Activated B cell treated with CpG ODN at 0.5 μM for 24 hours (primary cell): ENCODE measurements at regions of chr1 and their contacts with region 1.

Region 1: DNA sequence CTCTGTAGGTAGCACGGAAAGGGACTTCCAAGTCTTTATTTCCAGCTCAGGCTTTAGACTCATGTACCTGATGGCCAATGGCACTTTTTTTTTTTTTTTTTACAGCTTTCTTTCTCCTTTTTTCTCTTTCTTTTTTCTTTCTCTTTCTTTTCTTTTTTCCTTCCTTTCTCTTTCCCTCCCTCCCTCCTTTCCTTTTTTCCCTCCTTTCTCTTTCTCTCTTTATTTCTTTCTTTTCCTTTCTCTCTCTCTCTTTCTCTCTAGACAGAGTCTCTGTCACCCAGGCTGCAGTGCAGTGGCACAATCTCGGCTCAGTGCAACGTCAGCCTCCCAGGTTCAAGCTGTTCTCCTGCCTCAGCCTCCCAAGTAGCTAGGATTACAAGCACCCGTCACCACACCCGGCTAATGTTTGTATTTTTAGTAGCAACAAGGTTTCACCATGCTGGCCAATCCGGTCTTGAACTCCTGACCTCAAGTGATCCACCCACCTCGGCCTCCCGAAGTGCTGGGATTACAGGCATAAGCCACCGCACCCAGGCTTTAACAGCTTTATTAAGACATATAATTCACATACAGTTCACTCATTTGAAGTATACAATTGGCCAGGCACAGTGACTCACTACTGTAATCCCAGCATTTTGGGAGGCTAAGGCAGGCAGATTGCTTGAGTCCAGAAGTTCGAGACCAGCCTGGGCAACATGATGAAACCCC is 5.1 kb upstream of the DCAF8 start:
- DNase-seq: no peak
- ATAC-seq: no peak
- H3K4me3 Mint-ChIP-seq: no peak overlapping the region
- H3K27ac Mint-ChIP-seq: no peak overlapping the region
- H3K4me1 Mint-ChIP-seq: peaks cover 12% of the 10 kb centered on the region
- H3K27me3 Mint-ChIP-seq: no peaks in the 10 kb centered on the region
- CTCF ChIP-seq: no peak

Region 2: GRCh38 chr1:160108888-160109662 is 158.4 kb before region 1 on chr1:
- CTCF ChIA-PET with region 1: no interaction called
- POLR2A ChIA-PET with region 1: no interaction called
- intact Hi-C with region 1: no loop called
- DNase-seq: no peak
- ATAC-seq: peak; percentile 61
- H3K4me3 Mint-ChIP-seq: no peak overlapping the region
- H3K27ac Mint-ChIP-seq: no peak overlapping the region
- H3K4me1 Mint-ChIP-seq: peaks cover 5% of the 10 kb centered on the region
- H3K27me3 Mint-ChIP-seq: peaks cover 11% of the 10 kb centered on the region
- CTCF ChIP-seq: no peak

Region 3: GRCh38 chr1:160284782-160285344 is 17.4 kb after region 1 on chr1 and contains the start of gene PEX19:
- CTCF ChIA-PET with region 1: interaction called, 54 read pairs
- POLR2A ChIA-PET with region 1: interaction called, 46 read pairs
- intact Hi-C with region 1: loop called (anchors 1 kb)
- DNase-seq: peak; percentile 85
- ATAC-seq: peak; percentile 100
- H3K4me3 Mint-ChIP-seq: peak within 1 kb of the TSS; percentile 95
- H3K27ac Mint-ChIP-seq: peak within 1 kb of the TSS; percentile 87
- H3K4me1 Mint-ChIP-seq: peaks cover 24% of the 10 kb centered on the region
- H3K27me3 Mint-ChIP-seq: no peaks in the 10 kb centered on the region
- CTCF ChIP-seq: no peak
- total RNA-seq, gene PEX19: 43.7 and 50.3 TPM in 2 replicates